CD8-positive, alpha-beta T cell (primary cell): ENCODE measurements at regions of chr14 and their contacts with region 1.

Region 1: GRCh38 chr14:50321009-50321660 is 9.0 kb downstream of the DMAC2L start:
- DNase-seq: peak; percentile 29 to 93 (median 68)
- ATAC-seq: peak; percentile 95
- H3K4me3 ChIP-seq: no peak overlapping the region
- H3K4me3 Mint-ChIP-seq: no peak overlapping the region
- H3K27ac ChIP-seq: peak overlapping the region; percentile 10 to 59
- H3K27ac Mint-ChIP-seq: no peak overlapping the region
- H3K4me1 ChIP-seq: peaks cover 7% of the 10 kb centered on the region
- H3K4me1 Mint-ChIP-seq: peaks cover 21% of the 10 kb centered on the region
- H3K27me3 ChIP-seq: no peaks in the 10 kb centered on the region
- H3K27me3 Mint-ChIP-seq: no peaks in the 10 kb centered on the region
- CTCF ChIP-seq: peak; percentile 88

Region 2: DNA sequence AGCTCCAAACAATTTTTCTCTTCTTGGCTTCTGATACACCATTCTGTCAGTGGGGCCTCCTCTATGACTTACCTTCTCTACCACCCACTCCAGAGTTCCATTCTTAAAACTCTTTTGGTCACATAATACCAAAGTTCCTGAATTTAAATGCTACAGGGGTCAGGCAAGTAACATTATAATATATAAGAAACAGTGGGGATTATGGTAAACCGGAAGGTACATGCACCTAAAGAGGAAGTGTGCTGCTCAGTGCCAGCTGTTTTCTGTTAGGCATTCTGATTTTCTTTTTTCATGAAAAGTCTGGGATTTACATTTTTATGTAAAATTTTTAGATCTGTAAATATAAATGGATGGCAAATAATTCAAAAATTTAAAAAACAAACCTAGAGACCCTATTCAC is 129.6 kb before region 1 on chr14:
- CTCF ChIA-PET with region 1: no interaction called
- POLR2A ChIA-PET with region 1: no interaction called
- intact Hi-C with region 1: no loop called
- DNase-seq: no peak
- ATAC-seq: no peak
- H3K4me3 ChIP-seq: no peak overlapping the region
- H3K4me3 Mint-ChIP-seq: no peak overlapping the region
- H3K27ac ChIP-seq: no peak overlapping the region
- H3K27ac Mint-ChIP-seq: no peak overlapping the region
- H3K4me1 ChIP-seq: no peaks in the 10 kb centered on the region
- H3K4me1 Mint-ChIP-seq: no peaks in the 10 kb centered on the region
- H3K27me3 ChIP-seq: no peaks in the 10 kb centered on the region
- H3K27me3 Mint-ChIP-seq: no peaks in the 10 kb centered on the region
- CTCF ChIP-seq: no peak

Region 3: GRCh38 chr14:50335389-50335788 is 14.3 kb after region 1 on chr14:
- CTCF ChIA-PET with region 1: interaction called, 21 read pairs
- POLR2A ChIA-PET with region 1: no interaction called
- intact Hi-C with region 1: no loop called
- DNase-seq: no peak
- ATAC-seq: no peak
- H3K4me3 ChIP-seq: no peak overlapping the region
- H3K4me3 Mint-ChIP-seq: peak overlapping the region; percentile 63
- H3K27ac ChIP-seq: no peak overlapping the region
- H3K27ac Mint-ChIP-seq: peak overlapping the region; percentile 91
- H3K4me1 ChIP-seq: peaks cover 11% of the 10 kb centered on the region
- H3K4me1 Mint-ChIP-seq: peaks cover 14% of the 10 kb centered on the region
- H3K27me3 ChIP-seq: no peaks in the 10 kb centered on the region
- H3K27me3 Mint-ChIP-seq: no peaks in the 10 kb centered on the region
- CTCF ChIP-seq: no peak

Region 4: DNA sequence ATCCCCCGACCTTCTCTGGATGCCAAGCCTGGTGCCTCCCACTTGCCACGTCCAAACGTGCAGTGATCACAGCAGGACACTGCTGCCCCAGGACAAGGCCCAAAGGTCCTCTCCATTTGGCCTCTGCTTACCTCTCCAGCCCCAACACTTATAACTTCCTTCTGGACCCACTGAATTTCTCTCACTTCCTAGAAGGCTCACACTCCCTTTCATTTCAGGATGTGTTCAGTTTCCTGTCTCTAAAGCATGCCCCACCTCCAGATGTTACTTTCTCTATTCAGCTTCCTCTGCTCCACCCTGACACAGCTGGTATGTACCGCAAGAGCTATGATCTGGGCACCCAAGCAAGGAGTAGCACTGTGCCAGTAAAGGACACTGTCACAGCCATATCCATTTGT is 42.6 kb after region 1 on chr14:
- CTCF ChIA-PET with region 1: interaction called, 4 read pairs
- POLR2A ChIA-PET with region 1: interaction called, 4 read pairs
- intact Hi-C with region 1: loop called in 1 of 2 experiments (anchors 2 kb)
- DNase-seq: peak in 8 of 9 experiments; percentile 29 to 86 (median 54)
- ATAC-seq: peak; percentile 87
- H3K4me3 ChIP-seq: peak overlapping the region; percentile 44 to 60
- H3K4me3 Mint-ChIP-seq: peak overlapping the region; percentile 87
- H3K27ac ChIP-seq: peak overlapping the region; percentile 75 to 93
- H3K27ac Mint-ChIP-seq: peak overlapping the region; percentile 92
- H3K4me1 ChIP-seq: peaks cover 13% of the 10 kb centered on the region
- H3K4me1 Mint-ChIP-seq: peaks cover 38% of the 10 kb centered on the region
- H3K27me3 ChIP-seq: no peaks in the 10 kb centered on the region
- H3K27me3 Mint-ChIP-seq: no peaks in the 10 kb centered on the region
- CTCF ChIP-seq: no peak

Region 5: DNA sequence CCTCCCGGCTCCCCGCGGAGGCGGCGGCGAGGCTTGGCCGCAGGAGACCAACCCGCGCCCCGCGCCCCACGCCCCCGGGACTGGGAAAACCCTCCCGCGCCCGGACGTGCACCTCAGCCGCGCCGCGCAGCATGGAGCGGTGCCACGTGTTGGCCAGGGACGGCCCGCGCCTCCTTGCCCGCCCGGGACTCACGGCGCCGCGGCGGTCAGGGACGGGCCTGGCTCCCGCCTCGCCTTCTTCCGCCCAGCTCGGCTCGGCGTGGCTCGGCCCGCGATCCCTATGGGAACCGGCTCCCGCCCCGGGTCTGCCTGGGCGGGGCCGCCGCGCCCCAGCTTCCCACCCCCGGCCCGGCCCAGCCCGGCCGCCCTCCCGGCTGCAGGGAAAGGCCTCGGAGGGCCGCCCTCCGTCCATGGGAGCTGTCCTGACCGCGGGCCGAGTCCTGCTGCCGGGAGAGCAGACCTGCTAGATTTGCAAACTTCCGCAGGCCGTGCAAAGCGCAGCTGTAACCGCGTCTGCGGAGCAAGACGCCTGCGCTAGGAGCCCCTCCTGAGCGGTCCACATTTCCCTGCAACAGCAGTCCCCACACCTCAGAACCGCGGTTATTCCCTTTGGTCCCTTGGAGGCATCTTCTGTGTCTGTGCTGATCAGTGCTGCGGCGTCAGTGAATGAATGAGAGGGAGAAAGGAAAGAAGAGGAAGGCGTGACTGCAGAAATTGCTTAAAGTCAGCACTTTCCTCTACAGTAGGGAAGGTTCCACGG is 75.7 kb after region 1 on chr14 and contains the start of gene CDKL1:
- CTCF ChIA-PET with region 1: interaction called, 8 read pairs
- POLR2A ChIA-PET with region 1: no interaction called
- intact Hi-C with region 1: loop called in 1 of 2 experiments (anchors 2 kb)
- DNase-seq: peak in 8 of 9 experiments; percentile 7 to 61 (median 30)
- ATAC-seq: peak; percentile 66
- H3K4me3 ChIP-seq: peak within 1 kb of the TSS; percentile 55 to 56
- H3K4me3 Mint-ChIP-seq: peak within 1 kb of the TSS; percentile 86
- H3K27ac ChIP-seq: no peak within 1 kb of the TSS
- H3K27ac Mint-ChIP-seq: no peak within 1 kb of the TSS
- H3K4me1 ChIP-seq: peaks cover 6% of the 10 kb centered on the region
- H3K4me1 Mint-ChIP-seq: peaks cover 10% of the 10 kb centered on the region
- H3K27me3 ChIP-seq: no peaks in the 10 kb centered on the region
- H3K27me3 Mint-ChIP-seq: peaks cover 3% of the 10 kb centered on the region
- CTCF ChIP-seq: no peak
- total RNA-seq, gene CDKL1: 1.2 to 1.5 TPM

Region 6: GRCh38 chr14:50432131-50432530 is 111.0 kb after region 1 on chr14:
- CTCF ChIA-PET with region 1: interaction called, 3 read pairs
- POLR2A ChIA-PET with region 1: no interaction called
- intact Hi-C with region 1: loop called in 1 of 2 experiments (anchors 5 kb)
- DNase-seq: no peak
- ATAC-seq: no peak
- H3K4me3 ChIP-seq: no peak overlapping the region
- H3K4me3 Mint-ChIP-seq: no peak overlapping the region
- H3K27ac ChIP-seq: no peak overlapping the region
- H3K27ac Mint-ChIP-seq: no peak overlapping the region
- H3K4me1 ChIP-seq: no peaks in the 10 kb centered on the region
- H3K4me1 Mint-ChIP-seq: no peaks in the 10 kb centered on the region
- H3K27me3 ChIP-seq: no peaks in the 10 kb centered on the region
- H3K27me3 Mint-ChIP-seq: no peaks in the 10 kb centered on the region
- CTCF ChIP-seq: no peak

Region 7: GRCh38 chr14:50447461-50447860 is 126.3 kb after region 1 on chr14:
- CTCF ChIA-PET with region 1: no interaction called
- POLR2A ChIA-PET with region 1: no interaction called
- intact Hi-C with region 1: no loop called
- DNase-seq: no peak
- ATAC-seq: no peak
- H3K4me3 ChIP-seq: no peak overlapping the region
- H3K4me3 Mint-ChIP-seq: no peak overlapping the region
- H3K27ac ChIP-seq: no peak overlapping the region
- H3K27ac Mint-ChIP-seq: no peak overlapping the region
- H3K4me1 ChIP-seq: no peaks in the 10 kb centered on the region
- H3K4me1 Mint-ChIP-seq: no peaks in the 10 kb centered on the region
- H3K27me3 ChIP-seq: no peaks in the 10 kb centered on the region
- H3K27me3 Mint-ChIP-seq: no peaks in the 10 kb centered on the region
- CTCF ChIP-seq: no peak

Region 8: GRCh38 chr14:50532502-50533240 is 211.5 kb after region 1 on chr14 and contains the start of gene MAP4K5:
- CTCF ChIA-PET with region 1: interaction called, 10 read pairs
- POLR2A ChIA-PET with region 1: interaction called, 5 read pairs
- intact Hi-C with region 1: loop called (anchors 1 kb)
- DNase-seq: peak; percentile 73 to 95 (median 88)
- ATAC-seq: peak; percentile 93
- H3K4me3 ChIP-seq: peak within 1 kb of the TSS; percentile 45 to 88
- H3K4me3 Mint-ChIP-seq: peak within 1 kb of the TSS; percentile 89
- H3K27ac ChIP-seq: peak within 1 kb of the TSS; percentile 47 to 70
- H3K27ac Mint-ChIP-seq: peak within 1 kb of the TSS; percentile 92
- H3K4me1 ChIP-seq: peaks cover 42% of the 10 kb centered on the region
- H3K4me1 Mint-ChIP-seq: peaks cover 49% of the 10 kb centered on the region
- H3K27me3 ChIP-seq: no peaks in the 10 kb centered on the region
- H3K27me3 Mint-ChIP-seq: no peaks in the 10 kb centered on the region
- CTCF ChIP-seq: peak; percentile 69
- total RNA-seq, gene MAP4K5: 32.0 to 32.7 TPM